ENCODE measurements at regions of chr7 and their contacts with region 1.

Region 1: DNA sequence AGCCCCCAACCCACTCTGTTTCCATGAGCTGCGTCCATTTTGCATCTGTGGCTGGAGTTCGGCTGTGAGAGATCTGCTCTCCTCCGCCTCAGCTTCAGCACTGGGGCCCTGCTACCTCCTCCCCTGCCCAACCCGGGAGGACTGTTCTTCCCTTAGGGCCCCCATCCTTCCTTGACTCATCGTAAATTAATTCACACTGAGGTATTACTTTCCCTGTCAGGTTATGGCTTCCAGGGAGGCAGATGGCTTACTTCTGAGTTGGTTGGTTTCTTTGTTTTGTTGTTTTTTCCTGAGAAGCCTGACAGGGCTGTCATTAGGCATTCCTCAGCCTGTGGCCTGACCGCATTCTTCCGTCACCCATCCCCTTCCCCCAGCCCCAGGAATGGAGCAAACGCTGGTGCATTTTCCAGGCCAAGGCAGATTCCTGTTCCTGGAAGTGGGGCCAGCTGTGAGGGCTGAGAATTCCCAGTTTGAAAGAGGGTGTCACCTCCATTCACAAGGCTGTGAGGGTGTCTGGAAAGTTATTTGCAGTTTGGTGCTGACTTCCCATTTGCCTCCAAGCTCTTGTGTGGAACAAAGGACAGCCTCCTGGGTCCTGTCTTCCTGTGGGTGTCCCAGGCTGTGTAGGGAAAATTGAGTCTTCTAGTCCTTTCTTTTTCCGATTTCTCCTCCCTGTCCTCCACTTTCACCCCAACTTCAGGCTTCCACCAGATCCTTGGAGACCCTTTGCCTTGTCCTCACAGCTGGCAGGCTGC is 11.7 kb downstream of the CPA5 start:
- DNase-seq: peak; percentile 97
- ATAC-seq: peak; percentile 89
- H3K4me3 ChIP-seq: peak overlapping the region; percentile 38; the same call in 1 of the 2 replicates
- H3K27ac ChIP-seq: peak overlapping the region; percentile 92
- H3K4me1 ChIP-seq: peaks cover 37% of the 10 kb centered on the region
- H3K27me3 ChIP-seq: no peaks in the 10 kb centered on the region
- CTCF ChIP-seq: no peak

Region 2: GRCh38 chr7:130486114-130486958 is 130.0 kb after region 1 on chr7:
- CTCF ChIA-PET with region 1: no interaction called
- POLR2A ChIA-PET with region 1: no interaction called
- intact Hi-C with region 1: loop called (anchors 2 kb)
- DNase-seq: peak; percentile 85
- ATAC-seq: peak; percentile 74
- H3K4me3 ChIP-seq: peak overlapping the region; percentile 76
- H3K27ac ChIP-seq: peak overlapping the region; percentile 31; the same call in 1 of the 2 replicates
- H3K4me1 ChIP-seq: peaks cover 14% of the 10 kb centered on the region
- H3K27me3 ChIP-seq: no peaks in the 10 kb centered on the region
- CTCF ChIP-seq: peak; percentile 75

Measured in PC-3 (cell line).